Activated T-helper 2 cell treated with anti-CD3 and anti-CD28 coated beads, Interferon-gamma antibody, Interleukin-2, Interleukin-4, amounts not matched to agents 10 μg/mL and 5 μg/mL and 100 μg/mL, durations not matched to agents 14 hours and 24 hours and 36 hours (primary cell): ENCODE measurements at regions of chr4 and their contacts with region 1.

Region 1: GRCh38 chr4:8440492-8441341 is at the starts of genes ACOX3 and TRMT44:
- DNase-seq: peak; percentile 93
- H3K4me3 Mint-ChIP-seq: peak within 1 kb of the TSS; percentile 95
- H3K27ac Mint-ChIP-seq: peak within 1 kb of the TSS; percentile 89
- H3K4me1 Mint-ChIP-seq: peaks cover 64% of the 10 kb centered on the region
- H3K27me3 Mint-ChIP-seq: no peaks in the 10 kb centered on the region
- total RNA-seq, gene ACOX3: 28.4 and 29.9 TPM in 2 replicates
- total RNA-seq, gene TRMT44: 25.6 and 28.2 TPM in 2 replicates

Region 2: DNA sequence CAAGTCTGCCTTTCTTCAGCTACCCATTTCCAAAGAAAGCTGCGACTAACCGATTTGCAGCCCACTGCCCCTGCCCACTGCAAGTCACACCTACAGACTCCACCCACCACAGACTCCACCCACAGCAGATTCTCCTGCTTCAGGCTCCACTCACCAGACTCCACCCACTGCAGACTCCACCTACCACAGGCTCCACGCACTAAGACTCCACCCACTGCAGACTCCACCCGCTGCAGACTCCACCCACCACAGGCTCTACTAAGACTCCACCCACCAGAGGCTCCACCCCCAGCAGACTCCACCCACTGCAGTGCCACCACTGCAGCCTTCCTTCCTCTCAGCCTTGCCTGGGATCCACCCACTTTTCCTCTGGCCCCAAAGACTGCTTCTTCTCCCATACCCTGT is 323.4 kb before region 1 on chr4:
- intact Hi-C with region 1: no loop called
- DNase-seq: peak; percentile 30
- H3K4me3 Mint-ChIP-seq: no peak overlapping the region
- H3K27ac Mint-ChIP-seq: no peak overlapping the region
- H3K4me1 Mint-ChIP-seq: no peaks in the 10 kb centered on the region
- H3K27me3 Mint-ChIP-seq: no peaks in the 10 kb centered on the region

Region 3: DNA sequence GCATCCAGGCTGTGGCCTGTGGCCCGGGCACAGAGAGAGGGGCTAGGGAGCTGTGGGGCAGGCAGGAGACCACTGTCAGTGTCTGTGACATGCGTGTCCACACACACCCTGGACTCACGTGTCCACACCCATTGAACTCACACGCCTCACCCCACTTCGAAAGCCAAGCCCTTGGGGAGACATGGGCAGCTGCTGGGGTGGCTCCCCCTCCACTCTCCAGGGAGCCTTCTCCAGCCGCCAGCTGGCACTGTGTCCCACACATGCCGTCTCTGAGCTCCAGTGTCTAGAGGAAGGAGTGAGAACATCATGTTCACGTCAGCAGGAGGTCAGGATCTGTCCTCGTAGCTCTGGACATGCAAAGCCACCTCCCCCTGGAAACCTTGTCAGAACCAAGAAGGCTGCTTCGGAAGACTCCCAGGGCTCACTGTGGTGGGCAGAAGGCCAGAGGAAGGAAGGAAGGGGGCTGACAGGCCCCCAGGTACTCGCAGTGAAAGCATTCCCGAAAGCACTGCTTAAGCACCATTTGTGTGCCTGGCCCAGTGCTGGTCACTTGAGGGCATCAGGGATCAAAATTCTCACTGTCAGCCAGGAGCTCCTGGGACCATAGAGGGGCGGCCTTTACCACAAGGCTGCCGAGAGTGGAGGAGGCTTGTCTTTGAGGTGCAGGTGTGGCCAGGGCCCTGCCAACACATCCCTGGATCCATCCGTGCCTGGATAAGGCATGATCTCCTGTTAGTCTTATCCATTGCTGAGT is 109.7 kb before region 1 on chr4:
- intact Hi-C with region 1: no loop called
- DNase-seq: no peak
- H3K4me3 Mint-ChIP-seq: no peak overlapping the region
- H3K27ac Mint-ChIP-seq: no peak overlapping the region
- H3K4me1 Mint-ChIP-seq: no peaks in the 10 kb centered on the region
- H3K27me3 Mint-ChIP-seq: no peaks in the 10 kb centered on the region

Region 4: GRCh38 chr4:8428293-8429097 is 12.2 kb before region 1 on chr4:
- intact Hi-C with region 1: loop called (anchors 1 kb)
- DNase-seq: peak; percentile 90
- H3K4me3 Mint-ChIP-seq: peak overlapping the region; percentile 93
- H3K27ac Mint-ChIP-seq: peak overlapping the region; percentile 81
- H3K4me1 Mint-ChIP-seq: peaks cover 17% of the 10 kb centered on the region
- H3K27me3 Mint-ChIP-seq: no peaks in the 10 kb centered on the region